Tibial artery (tissue), 4 donors: ENCODE measurements at regions of chr17 and their contacts with region 1.

Region 1: GRCh38 chr17:9021158-9021991 is at the start of gene NTN1:
- DNase-seq: peak; percentile 46 to 81
- H3K4me3 ChIP-seq: peak within 1 kb of the TSS; percentile 74 to 87
- H3K27ac ChIP-seq: peak within 1 kb of the TSS; percentile 83 to 88
- H3K4me1 ChIP-seq: peaks cover 0 to 48% (median 27%) of the 10 kb centered on the region in 4 donors
- H3K27me3 ChIP-seq: no peaks in the 10 kb centered on the region
- CTCF ChIP-seq: no peak

Region 2: DNA sequence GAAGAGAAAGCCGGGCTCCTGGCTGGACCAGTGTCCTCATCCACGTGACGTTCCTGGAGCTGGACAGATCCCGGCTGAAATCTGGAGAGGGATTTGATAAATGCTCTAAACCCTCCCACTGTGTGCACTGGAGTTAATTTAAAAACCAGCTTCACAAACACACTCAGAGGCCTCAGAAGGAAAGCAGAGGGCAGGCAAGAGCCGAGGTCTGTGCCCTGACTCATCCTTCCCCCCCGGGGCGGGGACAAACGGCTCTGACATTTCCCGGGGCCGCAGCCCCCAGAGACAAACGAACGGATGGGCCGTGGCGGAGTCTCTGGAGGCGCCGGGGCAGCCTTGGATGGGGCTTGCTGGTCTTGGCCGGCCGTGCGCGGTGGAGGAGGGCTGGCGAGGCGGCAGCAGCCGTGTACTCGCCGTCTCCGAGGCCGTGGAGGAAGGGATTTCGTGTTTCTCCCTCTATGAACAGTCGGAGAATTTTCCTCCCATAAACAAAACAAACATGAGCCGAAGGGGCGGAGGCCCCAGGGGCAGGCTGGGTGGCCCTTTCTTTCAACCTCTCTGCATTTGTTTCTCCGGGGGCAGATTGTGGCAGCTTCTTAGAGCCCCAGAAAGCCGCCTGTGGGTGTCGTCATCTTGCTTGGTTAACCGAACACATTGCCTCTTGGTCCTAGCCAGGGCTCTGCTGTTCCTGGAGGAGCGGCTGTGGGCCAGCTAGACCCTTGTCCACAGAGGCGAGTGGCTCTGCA is 94.2 kb after region 1 on chr17:
- intact Hi-C with region 1: loop called (anchors 10 kb)
- DNase-seq: peak; percentile 82 to 92
- H3K4me3 ChIP-seq: peak overlapping the region; percentile 48 to 52
- H3K27ac ChIP-seq: peak overlapping the region; percentile 88
- H3K4me1 ChIP-seq: peaks cover 0 to 19% (median 9%) of the 10 kb centered on the region in 4 donors
- H3K27me3 ChIP-seq: no peaks in the 10 kb centered on the region
- CTCF ChIP-seq: peak; percentile 39 to 43

Region 3: DNA sequence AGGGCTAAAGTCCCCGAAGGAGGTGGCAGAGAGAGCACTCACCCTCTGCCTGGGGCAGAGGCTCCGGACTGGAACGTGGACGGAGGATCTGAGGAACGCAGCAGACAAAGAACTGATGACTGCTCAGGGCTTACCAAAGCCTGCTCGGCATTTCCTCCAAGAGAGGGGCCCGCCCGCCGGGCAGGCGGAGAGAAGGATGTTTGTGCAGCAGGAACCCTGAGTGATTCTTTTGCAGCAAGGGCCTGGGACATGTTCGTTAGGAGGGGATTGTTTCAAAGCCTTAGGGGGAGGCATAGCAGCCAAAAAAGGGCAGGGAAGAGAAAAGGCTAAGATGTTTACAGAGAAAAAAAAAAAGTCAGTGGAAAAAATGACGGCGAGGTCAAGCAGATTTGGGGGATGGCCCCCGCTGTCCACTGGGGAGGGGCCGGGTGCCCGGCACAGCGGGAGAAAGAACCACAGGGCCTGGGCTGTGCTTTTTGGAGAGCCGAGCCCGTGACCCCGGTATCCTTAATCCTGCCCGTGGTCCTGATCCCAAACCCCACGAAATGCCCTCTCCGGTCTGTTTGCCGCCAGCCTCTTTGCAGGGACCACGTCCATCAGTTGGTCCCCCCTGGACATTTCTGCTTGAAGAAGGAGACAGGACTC is 129.2 kb after region 1 on chr17:
- intact Hi-C with region 1: loop called (anchors 10 kb)
- DNase-seq: peak in 1 of 2 donors; percentile 74
- H3K4me3 ChIP-seq: no peak overlapping the region
- H3K27ac ChIP-seq: peak overlapping the region; percentile 53 to 81
- H3K4me1 ChIP-seq: peaks cover 0 to 38% (median 17%) of the 10 kb centered on the region in 4 donors
- H3K27me3 ChIP-seq: no peaks in the 10 kb centered on the region
- CTCF ChIP-seq: no peak